CD8-positive, alpha-beta T cell (primary cell): ENCODE measurements at regions of chr10 and their contacts with region 1.

Region 1: DNA sequence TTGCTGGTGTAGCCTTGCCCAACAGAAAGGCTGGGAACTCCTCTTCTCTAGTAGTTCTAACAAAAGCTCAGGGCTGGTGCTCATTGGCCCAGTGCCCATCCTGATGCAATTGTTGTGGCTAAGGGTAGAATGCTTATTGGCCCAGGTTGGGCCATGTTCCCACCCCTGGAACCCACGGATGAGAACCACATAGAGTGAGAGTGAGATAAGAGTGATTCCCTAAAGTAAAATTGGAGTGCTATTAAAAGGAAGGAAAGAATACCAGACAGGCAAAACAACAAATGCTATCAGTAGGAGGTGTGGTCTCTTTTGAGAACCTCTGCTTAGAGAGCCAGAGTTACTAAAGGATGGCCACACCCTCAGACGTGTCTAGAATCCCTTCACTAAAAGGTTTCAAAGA is 49.2 kb downstream of the LGI1 start:
- DNase-seq: no peak
- ATAC-seq: no peak
- H3K4me3 ChIP-seq: no peak overlapping the region
- H3K4me3 Mint-ChIP-seq: no peak overlapping the region
- H3K27ac ChIP-seq: no peak overlapping the region
- H3K27ac Mint-ChIP-seq: no peak overlapping the region
- H3K4me1 ChIP-seq: no peaks in the 10 kb centered on the region
- H3K4me1 Mint-ChIP-seq: no peaks in the 10 kb centered on the region
- H3K27me3 ChIP-seq: no peaks in the 10 kb centered on the region
- H3K27me3 Mint-ChIP-seq: peaks cover 20% of the 10 kb centered on the region
- CTCF ChIP-seq: no peak

Region 2: DNA sequence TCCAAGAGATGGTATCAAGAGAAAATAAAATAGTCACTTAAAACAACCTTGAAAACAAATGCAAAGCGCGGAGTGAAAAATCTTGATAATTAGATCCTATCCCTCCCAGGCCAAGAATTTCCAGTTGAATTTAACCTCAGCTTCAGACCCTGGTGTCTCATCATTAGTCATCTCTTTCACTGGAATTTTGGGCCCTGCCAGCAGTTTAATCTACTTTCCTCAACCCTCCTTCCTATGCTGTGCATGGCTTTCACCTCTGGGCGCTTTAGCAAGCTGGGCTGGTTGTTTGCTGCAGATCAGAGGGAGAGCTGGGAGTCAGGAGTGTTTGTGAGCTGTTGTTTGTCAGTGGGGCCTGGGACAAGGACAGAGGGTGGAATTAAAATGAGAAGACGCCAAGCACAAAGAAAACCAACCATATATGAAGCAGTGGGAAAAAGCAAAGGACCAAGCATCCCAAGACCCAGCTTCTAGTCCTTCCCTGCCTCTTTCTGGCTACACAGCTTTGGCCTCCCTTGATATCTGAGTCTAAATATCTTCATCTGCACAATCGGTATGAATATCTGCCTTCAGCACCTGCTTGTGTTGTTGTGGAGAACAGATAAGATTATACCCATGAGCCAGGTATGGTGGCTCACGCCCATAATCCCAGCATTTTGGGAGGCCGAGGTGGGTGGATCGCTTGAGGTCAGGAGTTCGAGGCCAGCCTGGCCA is 338.2 kb before region 1 on chr10:
- CTCF ChIA-PET with region 1: no interaction called
- POLR2A ChIA-PET with region 1: no interaction called
- intact Hi-C with region 1: loop called in 1 of 2 experiments (anchors 5 kb)
- DNase-seq: no peak
- ATAC-seq: no peak
- H3K4me3 ChIP-seq: no peak overlapping the region
- H3K4me3 Mint-ChIP-seq: no peak overlapping the region
- H3K27ac ChIP-seq: no peak overlapping the region
- H3K27ac Mint-ChIP-seq: no peak overlapping the region
- H3K4me1 ChIP-seq: no peaks in the 10 kb centered on the region
- H3K4me1 Mint-ChIP-seq: no peaks in the 10 kb centered on the region
- H3K27me3 ChIP-seq: no peaks in the 10 kb centered on the region
- H3K27me3 Mint-ChIP-seq: no peaks in the 10 kb centered on the region
- CTCF ChIP-seq: no peak

Region 3: DNA sequence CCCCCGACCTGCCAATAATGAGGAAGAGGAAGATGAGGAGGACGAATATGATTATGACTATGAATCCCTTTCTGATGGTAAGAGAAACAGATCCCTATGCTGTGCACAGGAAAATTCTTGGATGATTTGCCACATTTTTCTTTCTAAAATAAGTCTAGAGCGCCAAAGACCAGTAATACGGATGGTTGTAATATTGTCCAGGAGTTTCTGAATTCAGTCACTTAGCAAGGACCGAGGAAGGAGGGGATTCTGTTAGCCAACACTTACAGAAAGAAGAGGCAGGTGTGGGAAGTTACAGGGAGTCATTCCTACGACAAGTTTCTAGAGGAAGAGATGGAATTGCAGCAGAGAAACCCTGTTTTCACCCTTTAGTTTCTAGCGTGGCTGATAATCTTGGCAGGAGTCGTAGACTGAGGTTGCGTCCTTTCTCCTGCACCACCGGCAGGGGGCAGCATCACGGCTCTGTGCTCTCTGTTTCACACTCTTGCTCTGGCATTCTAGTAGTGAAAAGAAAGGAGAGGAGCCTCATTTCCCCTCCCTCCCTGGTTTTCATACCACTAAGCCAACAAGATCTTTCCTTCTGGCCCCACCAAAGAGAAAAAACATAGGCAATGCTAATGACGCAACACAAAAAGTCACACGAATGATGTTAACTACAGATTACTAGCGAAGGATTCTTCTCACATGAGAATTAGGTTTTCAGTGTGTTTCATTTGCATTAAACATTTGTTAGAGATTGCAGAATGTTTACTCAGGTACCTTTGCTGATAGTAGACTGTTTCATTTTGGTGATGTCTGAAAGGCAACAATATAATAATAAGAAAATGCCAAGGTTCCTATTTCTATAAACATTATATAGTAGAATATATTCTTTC is 473.2 kb after region 1 on chr10:
- CTCF ChIA-PET with region 1: no interaction called
- POLR2A ChIA-PET with region 1: no interaction called
- intact Hi-C with region 1: no loop called
- DNase-seq: peak in 8 of 9 experiments; percentile 25 to 61 (median 52)
- ATAC-seq: no peak
- H3K4me3 ChIP-seq: no peak overlapping the region
- H3K4me3 Mint-ChIP-seq: no peak overlapping the region
- H3K27ac ChIP-seq: no peak overlapping the region
- H3K27ac Mint-ChIP-seq: no peak overlapping the region
- H3K4me1 ChIP-seq: no peaks in the 10 kb centered on the region
- H3K4me1 Mint-ChIP-seq: peaks cover 6% of the 10 kb centered on the region
- H3K27me3 ChIP-seq: no peaks in the 10 kb centered on the region
- H3K27me3 Mint-ChIP-seq: peaks cover 23% of the 10 kb centered on the region
- CTCF ChIP-seq: peak; percentile 91